ENCODE measurements at regions of chr3 and their contacts with region 1.

Region 1: GRCh38 chr3:123884203-123884831 is at the start of gene MYLK:
- DNase-seq: peak; percentile 87
- H3K4me3 Mint-ChIP-seq: peak within 1 kb of the TSS; percentile 83
- H3K27ac Mint-ChIP-seq: no peak within 1 kb of the TSS
- H3K4me1 Mint-ChIP-seq: peaks cover 16% of the 10 kb centered on the region
- H3K27me3 Mint-ChIP-seq: peaks cover 58% of the 10 kb centered on the region
- total RNA-seq, gene MYLK: 0.21 and 0.26 TPM in 2 replicates

Region 2: GRCh38 chr3:123584988-123585937 is 299.1 kb before region 1 on chr3 and contains the start of gene HACD2:
- intact Hi-C with region 1: loop called (anchors 5 kb)
- DNase-seq: peak; percentile 98
- H3K4me3 Mint-ChIP-seq: no peak within 1 kb of the TSS
- H3K27ac Mint-ChIP-seq: peak within 1 kb of the TSS; percentile 74
- H3K4me1 Mint-ChIP-seq: peaks cover 16% of the 10 kb centered on the region
- H3K27me3 Mint-ChIP-seq: no peaks in the 10 kb centered on the region
- total RNA-seq, gene HACD2: 28.4 and 31.8 TPM in 2 replicates